ENCODE measurements at regions of chr19 and their contacts with region 1.

Region 1: GRCh38 chr19:21256722-21257121 is 72.5 kb downstream of the ZNF708 start:
- DNase-seq: peak in 1 of 2 experiments; percentile 10
- H3K4me3 ChIP-seq: no peak overlapping the region
- H3K4me3 Mint-ChIP-seq: no peak overlapping the region
- H3K27ac Mint-ChIP-seq: no peak overlapping the region
- H3K4me1 ChIP-seq: no peaks in the 10 kb centered on the region
- H3K4me1 Mint-ChIP-seq: no peaks in the 10 kb centered on the region
- H3K27me3 ChIP-seq: no peaks in the 10 kb centered on the region
- H3K27me3 Mint-ChIP-seq: no peaks in the 10 kb centered on the region
- CTCF ChIP-seq: peak; percentile 37

Region 2: GRCh38 chr19:21141787-21142464 is 114.8 kb before region 1 on chr19 and contains the start of gene ZNF431:
- CTCF ChIA-PET with region 1: no interaction called
- POLR2A ChIA-PET with region 1: no interaction called
- intact Hi-C with region 1: no loop called
- DNase-seq: peak; percentile 90 to 94
- H3K4me3 ChIP-seq: peak within 1 kb of the TSS; percentile 75
- H3K4me3 Mint-ChIP-seq: peak within 1 kb of the TSS; percentile 95
- H3K27ac Mint-ChIP-seq: peak within 1 kb of the TSS; percentile 98
- H3K4me1 ChIP-seq: no peaks in the 10 kb centered on the region
- H3K4me1 Mint-ChIP-seq: peaks cover 9% of the 10 kb centered on the region
- H3K27me3 ChIP-seq: no peaks in the 10 kb centered on the region
- H3K27me3 Mint-ChIP-seq: no peaks in the 10 kb centered on the region
- CTCF ChIP-seq: no peak
- total RNA-seq, gene ZNF431: 17.9 TPM in 2 replicates

Region 3: GRCh38 chr19:21202865-21203494 is 53.7 kb before region 1 on chr19:
- CTCF ChIA-PET with region 1: no interaction called
- POLR2A ChIA-PET with region 1: no interaction called
- intact Hi-C with region 1: loop called (anchors 5 kb)
- DNase-seq: no peak
- H3K4me3 ChIP-seq: no peak overlapping the region
- H3K4me3 Mint-ChIP-seq: no peak overlapping the region
- H3K27ac Mint-ChIP-seq: no peak overlapping the region
- H3K4me1 ChIP-seq: no peaks in the 10 kb centered on the region
- H3K4me1 Mint-ChIP-seq: no peaks in the 10 kb centered on the region
- H3K27me3 ChIP-seq: no peaks in the 10 kb centered on the region
- H3K27me3 Mint-ChIP-seq: no peaks in the 10 kb centered on the region
- CTCF ChIP-seq: peak in 1 of 2 experiments; percentile 32

Measured in Caco-2 (cell line).